Motor neuron (in vitro differentiated cells): ENCODE measurements at regions of chr19 and their contacts with region 1.

Region 1: DNA sequence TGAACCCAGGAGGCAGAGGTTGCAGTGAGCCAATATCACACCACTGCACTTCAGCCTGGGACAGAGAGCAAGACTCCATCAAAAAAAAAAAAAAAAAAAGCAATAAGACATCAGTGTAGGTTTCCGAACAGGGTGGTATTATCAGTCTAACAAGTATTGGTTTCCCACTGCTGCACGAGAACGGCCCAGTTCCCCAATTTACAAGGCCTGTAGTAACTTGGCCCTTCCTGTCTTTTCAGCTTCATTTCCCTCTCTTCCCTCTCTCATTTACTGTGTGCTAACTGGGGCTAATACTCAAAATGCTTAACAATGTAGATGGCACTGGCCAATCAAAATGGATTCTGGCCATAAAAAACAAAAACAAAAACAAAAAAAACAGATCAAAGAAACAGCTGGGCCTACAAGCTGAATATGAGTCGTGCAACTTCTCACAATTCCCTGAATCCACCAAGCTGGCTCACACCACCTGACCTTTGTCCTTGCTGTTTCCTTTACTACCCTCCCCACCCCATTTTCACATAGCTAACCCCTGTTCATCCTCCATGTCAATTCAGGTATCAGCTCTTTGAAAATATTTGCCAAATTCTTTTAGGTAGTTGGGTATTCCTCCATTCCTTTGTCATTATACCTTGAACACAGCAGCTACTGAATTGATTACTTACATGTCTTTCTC is 2.4 kb downstream of the TEX101 start:
- ATAC-seq: no peak
- H3K4me3 ChIP-seq: no peak overlapping the region
- H3K27ac ChIP-seq: no peak overlapping the region
- H3K4me1 ChIP-seq: no peaks in the 10 kb centered on the region

Region 2: GRCh38 chr19:42850981-42851717 is 565.9 kb before region 1 on chr19:
- in situ Hi-C with region 1: no loop called
- ATAC-seq: peak in 3 of 8 experiments; percentile 84 to 97 (median 85)
- H3K4me3 ChIP-seq: no peak overlapping the region
- H3K27ac ChIP-seq: no peak overlapping the region
- H3K4me1 ChIP-seq: no peaks in the 10 kb centered on the region

Region 3: GRCh38 chr19:43229315-43229714 is 187.8 kb before region 1 on chr19:
- in situ Hi-C with region 1: loop called in 1 of 9 experiments (anchors 25 kb)
- ATAC-seq: peak in 2 of 8 experiments; percentile 88 to 90
- H3K4me3 ChIP-seq: no peak overlapping the region
- H3K27ac ChIP-seq: no peak overlapping the region
- H3K4me1 ChIP-seq: no peaks in the 10 kb centered on the region